HEK293T (cell line): ENCODE measurements at regions of chr4 and their contacts with region 1.

Region 1: GRCh38 chr4:138935-139334 is 14.6 kb downstream of the ZNF718 start:
- DNase-seq: no peak

Region 2: DNA sequence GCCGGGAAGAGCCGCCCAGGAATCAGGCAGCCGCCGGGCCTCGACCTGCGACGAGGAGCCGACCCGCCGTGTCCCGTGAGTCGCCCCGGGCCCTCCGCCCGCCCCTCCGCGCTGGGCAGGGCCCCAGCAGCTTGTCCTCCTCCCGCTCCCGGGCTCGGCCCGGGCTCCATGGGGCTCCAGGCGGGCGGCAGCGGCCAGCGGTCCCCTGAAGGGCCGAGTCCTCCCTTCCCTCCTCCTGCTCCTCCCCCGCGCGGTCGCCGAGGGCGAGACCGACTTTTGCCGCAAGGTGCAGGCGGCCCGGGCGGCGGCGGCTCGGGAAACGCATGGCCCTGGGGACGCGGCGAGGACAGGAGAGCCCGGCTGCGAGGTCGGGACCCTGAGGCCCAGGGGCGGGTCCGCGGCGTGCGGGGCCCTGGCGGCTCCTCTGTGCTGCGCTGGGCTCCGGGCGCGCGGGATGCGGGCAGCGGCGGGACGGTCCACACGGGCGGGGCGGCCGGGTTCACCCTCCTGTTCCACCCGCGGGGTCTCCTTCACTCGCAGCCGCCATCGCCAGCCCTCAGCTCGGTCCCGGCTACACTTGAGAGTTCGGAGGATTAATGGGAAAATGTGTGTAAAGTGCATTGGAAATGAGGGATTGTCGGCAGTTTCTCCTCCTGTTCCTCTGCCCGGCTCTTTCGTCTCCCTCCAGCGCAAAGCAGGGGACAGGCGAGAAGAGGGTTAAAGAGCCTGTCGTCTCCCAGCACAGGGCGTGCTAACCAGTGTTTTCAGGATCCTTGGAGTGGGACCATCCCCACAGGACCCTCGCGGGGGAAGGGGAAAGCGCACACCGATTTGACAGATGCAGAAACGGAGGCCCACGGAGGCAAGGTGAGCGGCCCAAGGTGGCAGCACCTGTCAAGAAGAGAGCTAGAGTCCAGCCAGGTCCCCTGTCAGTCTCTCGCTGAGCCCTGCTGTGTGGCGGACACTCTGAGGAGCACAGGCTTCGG is 31.2 kb before region 1 on chr4:
- CTCF ChIA-PET with region 1: no interaction called
- POLR2A ChIA-PET with region 1: no interaction called
- DNase-seq: no peak

Region 3: GRCh38 chr4:124275-125081 is 14.5 kb before region 1 on chr4 and contains the start of gene ZNF718:
- CTCF ChIA-PET with region 1: interaction called, 11 read pairs
- POLR2A ChIA-PET with region 1: interaction called, 11 read pairs
- DNase-seq: no peak